ENCODE measurements at regions of chr1 and their contacts with region 1.

Region 1: GRCh38 chr1:234499119-234499942 is 20.4 kb upstream of the TARBP1 start:
- DNase-seq: peak; percentile 89
- ATAC-seq: peak; percentile 83
- H3K4me3 Mint-ChIP-seq: peak overlapping the region; percentile 11
- H3K27ac Mint-ChIP-seq: peak overlapping the region; percentile 77
- H3K4me1 Mint-ChIP-seq: peaks cover 59% of the 10 kb centered on the region
- H3K27me3 Mint-ChIP-seq: peaks cover 2% of the 10 kb centered on the region

Region 2: DNA sequence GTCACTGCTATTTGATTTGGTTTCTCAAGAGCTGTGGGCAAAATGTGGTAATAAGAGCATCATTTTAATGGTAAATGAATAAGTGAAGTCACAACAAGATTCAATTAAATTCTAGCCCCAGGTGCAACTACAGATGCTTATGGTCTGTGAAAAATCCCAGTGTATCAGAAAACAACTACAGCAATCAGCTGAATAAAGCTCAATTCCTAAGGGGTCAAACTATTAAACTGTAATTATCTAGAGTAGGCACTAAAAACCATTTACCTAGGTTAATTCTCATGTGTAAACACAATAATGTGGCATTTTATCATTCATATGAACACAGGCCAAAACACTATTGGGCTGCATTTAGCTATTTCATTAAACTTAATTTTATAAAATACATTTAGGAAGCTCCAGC is 30.0 kb before region 1 on chr1:
- CTCF ChIA-PET with region 1: no interaction called
- DNase-seq: no peak
- ATAC-seq: no peak
- H3K4me3 Mint-ChIP-seq: no peak overlapping the region
- H3K27ac Mint-ChIP-seq: no peak overlapping the region
- H3K4me1 Mint-ChIP-seq: peaks cover 18% of the 10 kb centered on the region
- H3K27me3 Mint-ChIP-seq: no peaks in the 10 kb centered on the region

Region 3: GRCh38 chr1:234486498-234487448 is 12.6 kb before region 1 on chr1:
- CTCF ChIA-PET with region 1: interaction called, 22 read pairs
- DNase-seq: peak; percentile 60
- ATAC-seq: peak; percentile 48
- H3K4me3 Mint-ChIP-seq: no peak overlapping the region
- H3K27ac Mint-ChIP-seq: peak overlapping the region; percentile 86
- H3K4me1 Mint-ChIP-seq: peaks cover 37% of the 10 kb centered on the region
- H3K27me3 Mint-ChIP-seq: peaks cover 17% of the 10 kb centered on the region

Region 4: GRCh38 chr1:234509452-234510328 is 10.4 kb after region 1 on chr1:
- CTCF ChIA-PET with region 1: interaction called, 14 read pairs
- DNase-seq: no peak
- ATAC-seq: no peak
- H3K4me3 Mint-ChIP-seq: no peak overlapping the region
- H3K27ac Mint-ChIP-seq: no peak overlapping the region
- H3K4me1 Mint-ChIP-seq: peaks cover 7% of the 10 kb centered on the region
- H3K27me3 Mint-ChIP-seq: peaks cover 6% of the 10 kb centered on the region

Region 5: GRCh38 chr1:234599617-234600417 is 100.5 kb after region 1 on chr1:
- CTCF ChIA-PET with region 1: interaction called, 12 read pairs
- DNase-seq: peak; percentile 84
- ATAC-seq: peak; percentile 81
- H3K4me3 Mint-ChIP-seq: peak overlapping the region; percentile 85
- H3K27ac Mint-ChIP-seq: peak overlapping the region; percentile 94
- H3K4me1 Mint-ChIP-seq: peaks cover 55% of the 10 kb centered on the region
- H3K27me3 Mint-ChIP-seq: no peaks in the 10 kb centered on the region

Region 6: DNA sequence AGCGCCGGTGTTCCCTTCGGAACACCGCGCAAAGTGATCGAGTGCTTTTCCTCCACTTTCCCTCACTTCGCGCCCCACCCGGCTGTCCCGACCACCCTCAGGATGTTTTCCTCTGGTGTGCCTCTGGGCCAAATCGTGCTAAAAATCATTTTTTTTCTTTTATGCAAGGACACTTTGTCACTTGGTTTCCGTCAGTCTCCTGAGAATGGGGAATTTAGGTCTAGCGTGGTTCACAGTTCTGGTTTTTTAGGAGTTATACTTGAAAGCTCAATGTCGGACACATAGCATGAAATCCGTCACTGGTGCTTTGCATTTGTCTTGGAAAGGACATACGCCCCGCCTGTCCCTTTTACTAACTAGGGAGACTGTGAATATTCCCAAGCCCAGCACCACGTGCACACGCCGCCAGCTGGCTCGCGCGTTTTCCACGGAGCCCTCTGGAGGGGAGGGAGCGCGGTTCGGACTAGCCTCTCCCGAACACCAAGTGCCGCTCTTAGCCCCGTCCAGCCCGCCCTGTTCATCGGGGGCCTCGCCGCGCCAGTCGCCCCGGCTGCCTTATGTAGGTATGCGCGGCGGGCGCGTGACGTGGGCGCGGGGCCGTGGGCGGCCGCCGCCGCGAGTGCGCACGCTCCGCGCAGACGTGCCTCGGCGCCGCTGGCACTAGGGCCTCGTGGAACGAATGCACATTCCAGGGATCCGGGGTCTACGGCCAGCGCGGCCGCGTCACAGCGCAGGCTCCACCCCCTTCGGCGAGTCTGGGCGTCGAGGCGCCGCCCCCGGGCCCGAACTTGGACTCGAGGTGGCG is 111.2 kb after region 1 on chr1:
- CTCF ChIA-PET with region 1: interaction called, 13 read pairs
- DNase-seq: peak; percentile 94
- ATAC-seq: peak; percentile 60
- H3K4me3 Mint-ChIP-seq: peak overlapping the region; percentile 93
- H3K27ac Mint-ChIP-seq: peak overlapping the region; percentile 96
- H3K4me1 Mint-ChIP-seq: peaks cover 43% of the 10 kb centered on the region
- H3K27me3 Mint-ChIP-seq: no peaks in the 10 kb centered on the region

Region 7: GRCh38 chr1:234691567-234691966 is 192.2 kb after region 1 on chr1:
- CTCF ChIA-PET with region 1: no interaction called
- DNase-seq: no peak
- ATAC-seq: no peak
- H3K4me3 Mint-ChIP-seq: no peak overlapping the region
- H3K27ac Mint-ChIP-seq: no peak overlapping the region
- H3K4me1 Mint-ChIP-seq: no peaks in the 10 kb centered on the region
- H3K27me3 Mint-ChIP-seq: peaks cover 5% of the 10 kb centered on the region

Region 8: GRCh38 chr1:235077571-235078479 is 578.5 kb after region 1 on chr1:
- CTCF ChIA-PET with region 1: interaction called, 32 read pairs
- DNase-seq: peak; percentile 92
- ATAC-seq: peak; percentile 80
- H3K4me3 Mint-ChIP-seq: peak overlapping the region; percentile 10
- H3K27ac Mint-ChIP-seq: no peak overlapping the region
- H3K4me1 Mint-ChIP-seq: peaks cover 35% of the 10 kb centered on the region
- H3K27me3 Mint-ChIP-seq: no peaks in the 10 kb centered on the region

Region 9: DNA sequence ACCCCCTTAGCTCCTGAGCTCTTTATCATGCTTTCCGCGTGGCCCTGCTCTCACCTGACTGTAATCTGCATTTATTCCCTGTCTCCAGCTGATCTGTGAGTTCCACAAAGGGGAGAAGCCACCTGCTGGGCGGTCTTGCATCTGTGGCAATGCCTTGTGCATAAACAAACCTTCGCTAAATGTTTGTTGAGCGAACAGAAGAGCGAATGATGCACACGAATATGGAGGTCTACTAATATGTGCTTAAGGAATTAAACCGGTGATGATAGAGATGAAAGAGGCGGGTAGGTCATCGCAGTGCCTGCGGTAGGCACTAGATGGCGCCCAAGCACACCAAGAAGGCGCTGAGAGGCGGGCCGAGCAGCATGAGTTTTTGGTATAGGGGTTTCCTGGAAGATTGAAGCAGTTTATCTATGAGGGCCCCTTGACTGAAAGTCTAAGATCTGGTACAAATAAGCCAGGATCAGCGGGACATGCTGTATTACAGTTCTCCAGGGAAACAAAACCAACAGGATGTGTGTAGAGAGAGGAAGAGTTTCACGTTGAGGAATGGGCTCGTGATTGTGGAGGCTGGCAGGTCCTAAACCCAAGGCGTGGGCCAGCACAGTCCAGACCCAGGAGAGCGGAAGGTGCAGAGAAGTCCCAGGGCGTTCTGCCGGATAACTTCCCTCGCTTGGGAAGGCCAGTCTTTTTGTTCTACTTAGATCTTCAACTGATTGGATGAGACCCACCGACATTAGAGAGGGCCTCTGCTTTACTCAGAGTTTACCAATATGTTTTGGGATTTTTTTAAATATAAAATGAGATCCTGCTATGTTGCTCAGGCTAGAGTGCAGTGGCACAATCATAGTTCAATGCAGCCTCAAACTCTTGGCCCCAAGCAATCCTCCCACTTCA is 594.6 kb after region 1 on chr1:
- CTCF ChIA-PET with region 1: interaction called, 12 read pairs
- DNase-seq: peak; percentile 88
- ATAC-seq: peak; percentile 90
- H3K4me3 Mint-ChIP-seq: no peak overlapping the region
- H3K27ac Mint-ChIP-seq: peak overlapping the region; percentile 54
- H3K4me1 Mint-ChIP-seq: peaks cover 19% of the 10 kb centered on the region
- H3K27me3 Mint-ChIP-seq: peaks cover 3% of the 10 kb centered on the region